Transverse colon (tissue), 4 donors: ENCODE measurements at regions of chr1 and their contacts with region 1.

Region 1: DNA sequence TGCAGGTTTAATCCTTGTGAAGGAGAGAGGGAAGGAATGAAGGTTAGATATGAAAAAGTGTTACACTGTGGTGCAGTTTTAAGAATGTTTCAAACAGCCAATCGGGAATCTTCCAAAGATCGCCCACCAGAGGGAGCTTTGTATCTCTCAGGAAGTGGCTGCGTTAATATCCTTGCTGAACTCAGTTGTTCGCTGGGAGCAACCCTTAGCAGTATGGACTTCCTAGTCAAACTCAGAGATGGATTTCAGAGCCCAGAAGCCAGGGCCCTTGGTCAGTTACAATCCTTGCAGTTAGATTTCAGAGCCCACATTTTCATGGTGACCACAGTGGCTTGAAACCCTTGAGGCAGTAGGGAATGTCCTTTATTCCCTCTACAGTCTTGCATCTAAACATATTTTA is 136.2 kb downstream of the NTNG1 start:
- DNase-seq: peak; percentile 46
- H3K4me3 ChIP-seq: no peak overlapping the region
- H3K27ac ChIP-seq: no peak overlapping the region
- H3K4me1 ChIP-seq: no peaks in the 10 kb centered on the region
- H3K27me3 ChIP-seq: no peaks in the 10 kb centered on the region
- CTCF ChIP-seq: peak; percentile 27 to 48 (median 39)
- EP300 ChIP-seq: no peak
- POLR2A ChIP-seq: no peak

Region 2: GRCh38 chr1:107309962-107310361 is 32.9 kb after region 1 on chr1:
- in situ Hi-C with region 1: no loop called
- intact Hi-C with region 1: no loop called
- DNase-seq: no peak
- H3K4me3 ChIP-seq: no peak overlapping the region
- H3K27ac ChIP-seq: no peak overlapping the region
- H3K4me1 ChIP-seq: no peaks in the 10 kb centered on the region
- H3K27me3 ChIP-seq: no peaks in the 10 kb centered on the region
- CTCF ChIP-seq: no peak
- EP300 ChIP-seq: no peak
- POLR2A ChIP-seq: no peak

Region 3: GRCh38 chr1:107529502-107530149 is 252.6 kb after region 1 on chr1:
- in situ Hi-C with region 1: loop called in 1 of 4 experiments (anchors 10 kb)
- intact Hi-C with region 1: no loop called
- DNase-seq: peak; percentile 19
- H3K4me3 ChIP-seq: no peak overlapping the region
- H3K27ac ChIP-seq: peak overlapping the region in 1 of 4 donors; percentile 15
- H3K4me1 ChIP-seq: peaks cover under 1 to 5% (median under 1%) of the 10 kb centered on the region in 4 donors
- H3K27me3 ChIP-seq: no peaks in the 10 kb centered on the region
- CTCF ChIP-seq: peak; percentile 73 to 85 (median 77)
- EP300 ChIP-seq: no peak
- POLR2A ChIP-seq: no peak